Psoas muscle (tissue), 8 donors: ENCODE measurements at regions of chr22 and their contacts with region 1.

Region 1: GRCh38 chr22:50507991-50508884 is at the start of gene NCAPH2:
- DNase-seq: peak; percentile 94 to 98
- ATAC-seq: peak; percentile 81 to 90 (median 82)
- H3K4me3 ChIP-seq: peak within 1 kb of the TSS; percentile 89
- H3K27ac ChIP-seq: peak within 1 kb of the TSS; percentile 85
- H3K4me1 ChIP-seq: peaks cover 17% of the 10 kb centered on the region
- H3K27me3 ChIP-seq: no peaks in the 10 kb centered on the region
- CTCF ChIP-seq: no peak
- total RNA-seq, gene NCAPH2: 19.2 to 24.2 (median 21.7) TPM

Region 2: GRCh38 chr22:50367778-50368500 is 140.3 kb before region 1 on chr22:
- intact Hi-C with region 1: no loop called
- DNase-seq: no peak
- ATAC-seq: no peak
- H3K4me3 ChIP-seq: no peak overlapping the region
- H3K27ac ChIP-seq: no peak overlapping the region
- H3K4me1 ChIP-seq: no peaks in the 10 kb centered on the region
- H3K27me3 ChIP-seq: no peaks in the 10 kb centered on the region
- CTCF ChIP-seq: no peak

Region 3: DNA sequence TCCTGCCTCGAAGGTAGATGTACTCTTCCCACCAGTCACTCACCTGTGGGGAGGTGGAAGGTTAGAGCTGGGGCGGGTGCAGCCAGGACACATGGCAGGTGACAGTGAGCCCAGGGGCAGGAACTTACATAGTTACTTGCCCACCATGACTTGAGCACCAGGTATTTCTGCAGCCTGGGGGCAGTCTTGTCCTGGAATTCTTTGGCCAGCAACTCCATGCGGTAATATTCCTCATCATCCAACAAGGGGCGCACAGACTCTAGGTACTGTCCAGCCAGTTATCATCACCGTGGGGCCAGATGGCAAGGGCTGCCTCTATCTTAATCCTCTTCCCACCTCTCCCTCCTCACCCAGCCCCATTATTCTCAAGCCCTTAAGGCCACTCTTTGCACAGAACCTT is 67.8 kb after region 1 on chr22:
- intact Hi-C with region 1: loop called (anchors 5 kb)
- DNase-seq: no peak
- ATAC-seq: peak in 2 of 4 donors; percentile 9 to 23
- H3K4me3 ChIP-seq: no peak overlapping the region
- H3K27ac ChIP-seq: no peak overlapping the region
- H3K4me1 ChIP-seq: peaks cover 25% of the 10 kb centered on the region
- H3K27me3 ChIP-seq: no peaks in the 10 kb centered on the region
- CTCF ChIP-seq: peak; percentile 20

Region 4: DNA sequence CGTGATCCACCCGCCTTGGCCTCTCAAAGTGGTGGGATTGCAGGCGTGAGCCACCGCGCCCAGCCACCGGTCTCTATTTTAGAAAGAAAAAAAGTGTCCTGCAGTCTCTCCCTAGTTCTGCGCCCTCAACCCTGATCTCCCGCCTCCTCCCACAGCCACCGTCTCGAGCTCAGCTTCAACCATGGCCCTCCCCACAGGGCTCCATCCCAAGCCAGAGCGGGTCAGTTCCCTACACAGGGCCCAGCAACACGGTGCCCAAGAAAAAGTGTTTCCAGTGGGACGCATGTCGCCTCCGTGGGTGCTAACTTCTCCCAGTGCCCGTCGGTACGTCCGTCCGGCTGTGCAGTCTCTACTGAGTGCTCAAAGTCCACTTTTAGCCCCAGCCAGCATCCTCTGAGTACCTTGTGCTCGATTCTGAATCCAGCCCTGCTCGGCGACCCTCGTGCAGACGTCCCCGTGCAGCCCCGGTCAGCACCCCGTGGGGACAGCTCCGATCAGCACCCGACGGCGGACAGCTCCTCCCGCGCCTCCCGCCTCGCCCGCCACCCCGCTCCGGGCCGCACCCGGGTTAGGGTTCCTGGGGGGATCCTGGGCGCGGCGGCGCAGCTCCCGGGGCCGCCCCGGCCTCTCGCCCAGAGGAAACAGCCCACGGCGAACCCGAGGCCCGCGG is 91.7 kb after region 1 on chr22:
- intact Hi-C with region 1: no loop called
- DNase-seq: peak in 1 of 2 donors; percentile 51
- ATAC-seq: peak; percentile 47 to 74 (median 72)
- H3K4me3 ChIP-seq: peak overlapping the region; percentile 50
- H3K27ac ChIP-seq: no peak overlapping the region
- H3K4me1 ChIP-seq: no peaks in the 10 kb centered on the region
- H3K27me3 ChIP-seq: peaks cover 0 to 56% (median 25%) of the 10 kb centered on the region in 3 donors
- CTCF ChIP-seq: no peak